ENCODE measurements at regions of chr3 and their contacts with region 1.

Region 1: GRCh38 chr3:126982471-126983175 is at the start of gene PLXNA1:
- DNase-seq: peak; percentile 80
- H3K4me3 Mint-ChIP-seq: peak within 1 kb of the TSS; percentile 77
- H3K27ac Mint-ChIP-seq: peak within 1 kb of the TSS; percentile 82
- H3K4me1 Mint-ChIP-seq: peaks cover 17% of the 10 kb centered on the region
- H3K27me3 Mint-ChIP-seq: peaks cover 3% of the 10 kb centered on the region
- total RNA-seq, gene PLXNA1: 5.0 to 5.8 TPM

Region 2: DNA sequence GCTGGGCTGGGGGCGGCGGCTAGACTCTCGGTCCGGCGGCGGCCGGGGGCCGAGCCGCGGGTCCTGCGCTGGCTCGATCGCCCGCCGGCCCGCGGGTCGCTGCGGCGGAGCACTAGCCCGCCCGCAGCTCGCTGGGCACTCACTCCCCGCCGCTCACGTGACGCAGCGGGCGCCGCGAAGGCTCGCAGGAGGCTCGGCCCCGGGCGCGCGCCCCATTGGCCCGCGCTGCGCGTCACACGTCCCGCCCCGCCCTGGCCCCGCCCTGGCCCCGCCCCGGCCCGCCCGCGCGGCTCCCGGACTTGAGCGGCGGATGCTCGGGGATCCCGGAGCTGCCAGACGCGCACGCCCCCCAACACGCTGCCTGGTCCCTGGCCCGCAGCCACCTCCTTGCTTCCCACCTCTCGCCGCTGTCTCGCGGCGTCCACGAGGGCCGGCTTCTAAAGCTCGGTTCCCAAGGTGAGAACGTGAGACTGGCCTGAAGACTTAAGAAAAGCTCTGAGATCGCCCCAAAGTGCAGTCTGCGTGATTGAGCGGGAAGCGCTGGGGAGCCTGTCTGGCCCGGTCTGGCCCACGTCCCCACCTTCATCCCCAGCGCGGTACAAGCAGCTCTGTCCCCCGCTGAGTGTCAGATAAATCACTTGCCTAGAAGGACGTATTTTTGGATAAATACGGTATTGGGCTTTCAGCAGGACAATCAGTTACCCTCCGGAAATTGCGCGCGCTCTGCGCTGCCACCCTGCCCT is 625.2 kb before region 1 on chr3 and contains the start of gene KLF15:
- CTCF ChIA-PET with region 1: no interaction called
- intact Hi-C with region 1: loop called (anchors 10 kb)
- DNase-seq: peak; percentile 76
- H3K4me3 Mint-ChIP-seq: peak within 1 kb of the TSS; percentile 82
- H3K27ac Mint-ChIP-seq: peak within 1 kb of the TSS; percentile 65
- H3K4me1 Mint-ChIP-seq: peaks cover 10% of the 10 kb centered on the region
- H3K27me3 Mint-ChIP-seq: peaks cover 41% of the 10 kb centered on the region
- total RNA-seq, gene KLF15: 0.62 to 0.89 TPM

Region 3: DNA sequence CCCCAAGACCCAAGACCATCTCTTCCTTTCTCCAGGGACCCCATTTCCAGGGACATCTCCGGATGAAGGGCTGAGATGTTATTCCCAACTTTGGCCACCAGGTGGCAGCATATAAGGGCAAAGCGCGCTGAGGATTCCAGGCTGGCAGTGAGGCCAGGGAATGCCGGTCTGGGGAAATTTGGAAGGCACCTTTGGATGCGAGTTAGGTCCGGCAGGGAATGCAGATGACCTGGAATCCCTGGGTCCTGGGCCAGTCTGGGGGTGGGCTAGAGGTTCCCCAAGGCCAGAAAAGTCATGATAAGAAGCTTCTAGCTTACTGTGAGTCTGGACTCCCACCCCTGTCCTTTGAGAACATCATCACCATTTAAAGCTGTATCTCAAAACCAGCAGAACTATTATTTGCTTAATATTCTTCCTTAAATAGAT is 460.2 kb before region 1 on chr3:
- CTCF ChIA-PET with region 1: no interaction called
- intact Hi-C with region 1: loop called (anchors 2 kb)
- DNase-seq: peak; percentile 42
- H3K4me3 Mint-ChIP-seq: no peak overlapping the region
- H3K27ac Mint-ChIP-seq: no peak overlapping the region
- H3K4me1 Mint-ChIP-seq: no peaks in the 10 kb centered on the region
- H3K27me3 Mint-ChIP-seq: peaks cover 28% of the 10 kb centered on the region

Region 4: DNA sequence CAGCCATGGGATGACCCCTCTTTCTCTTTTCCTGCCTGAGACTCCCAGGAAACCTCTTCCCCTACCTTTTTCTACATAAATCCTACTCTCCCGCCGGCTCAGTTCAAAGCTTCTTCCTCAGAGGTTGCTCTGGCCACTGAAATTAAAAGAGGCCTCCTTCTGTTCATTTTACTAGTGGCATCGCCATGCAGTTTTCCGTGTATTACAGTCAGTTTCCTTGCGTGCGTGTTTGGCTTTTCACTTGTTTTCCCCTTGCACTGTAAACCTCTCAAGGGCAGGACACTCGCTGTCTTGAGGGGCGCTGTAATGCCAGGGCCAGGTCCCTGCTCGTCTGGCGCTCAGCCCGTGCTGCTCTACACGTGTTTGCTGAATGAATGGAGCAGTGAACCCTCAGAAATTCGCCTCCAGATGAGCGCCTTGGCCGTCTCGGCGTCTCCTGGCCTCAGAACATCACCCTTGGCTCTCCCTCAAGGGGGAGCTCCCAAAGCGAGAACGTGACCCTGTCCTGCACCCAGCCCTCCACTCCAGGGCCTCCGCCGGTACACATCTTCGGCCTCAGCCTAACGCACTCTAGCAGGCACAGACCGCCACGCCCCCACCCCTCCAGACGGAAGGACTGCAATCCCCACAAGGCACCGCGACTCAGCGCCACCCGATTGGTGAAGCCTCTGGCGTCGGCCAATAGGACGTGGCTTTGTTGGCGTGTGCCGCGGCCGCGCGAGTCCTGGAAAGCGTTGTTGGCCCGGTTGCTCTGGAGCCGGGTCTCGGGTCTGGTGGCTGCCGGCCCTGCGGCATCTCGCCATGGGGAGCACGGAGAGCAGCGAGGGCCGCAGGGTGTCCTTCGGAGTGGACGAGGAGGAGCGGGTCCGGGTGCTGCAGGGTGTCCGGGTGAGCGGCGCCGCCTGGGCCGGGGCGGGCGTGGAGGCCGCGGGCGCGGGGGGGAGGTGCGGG is 278.8 kb before region 1 on chr3 and contains the start of gene CHCHD6:
- CTCF ChIA-PET with region 1: no interaction called
- intact Hi-C with region 1: loop called (anchors 1 kb)
- DNase-seq: peak; percentile 95
- H3K4me3 Mint-ChIP-seq: peak within 1 kb of the TSS; percentile 97
- H3K27ac Mint-ChIP-seq: peak within 1 kb of the TSS; percentile 65
- H3K4me1 Mint-ChIP-seq: peaks cover 19% of the 10 kb centered on the region
- H3K27me3 Mint-ChIP-seq: peaks cover 4% of the 10 kb centered on the region
- total RNA-seq, gene CHCHD6: 17.2 to 17.7 TPM

Region 5: DNA sequence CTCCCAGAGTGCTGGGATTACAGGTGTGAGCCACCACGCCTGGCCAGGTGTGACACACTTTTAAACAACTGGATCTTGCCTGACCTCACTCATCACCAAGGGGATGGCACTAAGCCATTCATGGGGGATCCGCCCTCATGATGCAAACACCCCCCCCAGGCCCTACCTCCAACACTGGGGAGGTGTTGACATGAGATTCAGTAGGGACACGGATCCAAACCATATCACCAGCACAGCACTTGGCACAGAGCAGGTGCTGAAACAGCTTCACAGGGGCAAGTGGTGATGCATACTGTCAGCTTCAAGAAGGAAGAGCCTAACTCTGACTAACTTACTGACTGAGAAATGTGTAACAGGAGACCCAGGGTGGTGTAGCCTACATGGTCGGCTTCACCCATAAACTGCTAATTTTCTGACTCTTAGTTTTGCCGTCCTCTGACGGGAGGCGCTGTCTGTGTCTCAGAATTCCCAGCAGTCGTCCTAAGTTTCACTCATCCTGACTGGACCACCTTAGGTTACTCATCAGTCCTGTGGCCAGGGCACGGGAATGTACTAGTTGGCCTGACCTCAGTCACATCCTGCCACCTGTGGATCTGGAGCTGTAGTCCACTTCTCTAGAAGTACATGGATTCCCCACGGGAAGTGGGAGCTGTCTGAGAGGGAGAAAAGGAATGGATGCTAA is 81.6 kb before region 1 on chr3:
- CTCF ChIA-PET with region 1: no interaction called
- intact Hi-C with region 1: no loop called
- DNase-seq: no peak
- H3K4me3 Mint-ChIP-seq: no peak overlapping the region
- H3K27ac Mint-ChIP-seq: no peak overlapping the region
- H3K4me1 Mint-ChIP-seq: no peaks in the 10 kb centered on the region
- H3K27me3 Mint-ChIP-seq: no peaks in the 10 kb centered on the region

Region 6: DNA sequence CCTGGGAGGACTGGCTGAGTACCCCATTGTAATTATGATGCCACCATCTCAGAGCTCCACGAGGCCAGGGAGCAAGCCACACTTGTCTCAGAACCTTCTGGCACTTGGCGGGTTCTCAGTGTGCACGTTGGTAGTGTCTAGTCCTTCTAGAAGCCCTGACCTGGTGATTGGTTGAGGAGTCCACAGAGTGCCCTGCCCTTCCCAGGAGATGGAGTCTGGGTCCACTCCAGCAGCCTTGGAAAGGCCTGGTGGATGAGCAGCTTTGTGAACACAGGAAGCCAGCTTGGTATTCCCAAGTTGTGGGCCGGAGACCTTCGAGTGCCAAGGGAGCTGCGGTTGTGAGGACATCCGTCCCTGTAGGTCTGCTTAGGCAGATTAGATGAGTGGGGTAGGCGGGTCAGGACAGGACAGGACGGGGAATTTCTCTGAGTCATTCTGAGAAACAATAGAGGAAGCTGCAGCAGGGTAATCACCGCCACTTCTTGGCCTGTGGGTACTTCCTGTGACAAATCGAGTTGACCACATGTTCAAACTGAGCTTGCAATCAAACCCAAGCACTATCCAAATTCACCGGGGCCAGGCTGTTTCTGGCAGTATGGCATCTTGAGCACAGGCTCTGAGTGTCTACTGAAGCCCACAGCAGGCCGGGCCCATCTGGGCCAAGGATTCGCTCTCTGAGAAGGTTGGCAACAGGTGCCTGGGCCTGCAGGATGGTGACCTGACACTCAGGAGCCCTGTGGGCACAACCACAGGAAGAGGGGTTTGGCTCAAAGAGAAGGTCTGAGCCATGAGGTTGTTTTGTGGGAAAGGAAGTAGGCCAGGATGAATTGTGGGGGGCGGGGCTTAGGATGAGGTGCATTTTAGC is 71.2 kb before region 1 on chr3:
- CTCF ChIA-PET with region 1: no interaction called
- intact Hi-C with region 1: loop called (anchors 2 kb)
- DNase-seq: peak; percentile 84
- H3K4me3 Mint-ChIP-seq: peak overlapping the region; percentile 10
- H3K27ac Mint-ChIP-seq: peak overlapping the region; percentile 82
- H3K4me1 Mint-ChIP-seq: peaks cover 26% of the 10 kb centered on the region
- H3K27me3 Mint-ChIP-seq: no peaks in the 10 kb centered on the region

Region 7: GRCh38 chr3:127544192-127544802 is 561.7 kb after region 1 on chr3:
- CTCF ChIA-PET with region 1: interaction called, 6 read pairs
- intact Hi-C with region 1: loop called (anchors 1 kb)
- DNase-seq: peak; percentile 80
- H3K4me3 Mint-ChIP-seq: no peak overlapping the region
- H3K27ac Mint-ChIP-seq: no peak overlapping the region
- H3K4me1 Mint-ChIP-seq: peaks cover 7% of the 10 kb centered on the region
- H3K27me3 Mint-ChIP-seq: no peaks in the 10 kb centered on the region

Region 8: DNA sequence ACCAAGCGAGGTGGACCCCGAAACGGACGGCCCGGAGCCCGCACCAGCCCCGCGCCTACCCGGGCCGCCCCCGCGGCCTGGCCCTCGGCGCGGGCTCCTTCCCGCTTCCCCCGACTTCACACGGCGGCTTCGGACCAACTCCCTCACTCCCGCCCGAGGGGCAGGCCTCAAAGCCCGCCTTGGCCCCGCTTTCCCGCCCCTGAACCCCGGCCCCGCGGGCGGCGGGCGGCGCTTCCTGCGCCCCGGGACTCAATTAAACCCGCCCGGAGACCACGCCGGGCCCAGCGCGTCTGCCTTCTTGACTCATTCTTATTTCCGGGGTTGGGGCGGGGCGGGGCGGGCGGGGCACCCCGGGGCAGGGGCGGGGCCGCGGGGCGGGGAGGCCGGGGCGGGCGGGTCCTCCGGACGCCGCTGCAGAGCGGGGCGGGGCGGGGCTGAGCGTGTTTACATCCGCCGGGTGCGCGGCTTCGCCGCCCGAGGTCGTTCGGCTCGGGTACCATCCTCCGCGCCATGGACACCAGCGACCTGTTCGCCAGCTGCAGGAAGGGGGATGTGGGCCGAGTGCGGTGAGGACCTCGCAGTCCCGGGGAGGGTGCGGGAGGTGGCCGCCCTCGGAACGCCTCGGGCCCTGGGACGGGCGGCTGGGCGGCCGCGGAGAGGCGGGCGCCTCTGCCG is 690.0 kb after region 1 on chr3 and contains the start of gene ABTB1:
- CTCF ChIA-PET with region 1: no interaction called
- intact Hi-C with region 1: loop called (anchors 1 kb)
- DNase-seq: peak; percentile 89
- H3K4me3 Mint-ChIP-seq: peak within 1 kb of the TSS; percentile 86
- H3K27ac Mint-ChIP-seq: peak within 1 kb of the TSS; percentile 87
- H3K4me1 Mint-ChIP-seq: peaks cover 21% of the 10 kb centered on the region
- H3K27me3 Mint-ChIP-seq: no peaks in the 10 kb centered on the region
- total RNA-seq, gene ABTB1: 10.6 to 13.5 TPM